Thyroid gland (tissue), 4 donors: ENCODE measurements at regions of chr11 and their contacts with region 1.

Region 1: GRCh38 chr11:95150946-95151684 is 61.5 kb downstream of the ENDOD1 start:
- DNase-seq: peak; percentile 93 to 94
- H3K4me3 ChIP-seq: peak overlapping the region; percentile 40 to 60 (median 57)
- H3K27ac ChIP-seq: peak overlapping the region; percentile 91 to 97 (median 95)
- H3K4me1 ChIP-seq: peaks cover 7 to 12% of the 10 kb centered on the region in 2 donors
- H3K27me3 ChIP-seq: no peaks in the 10 kb centered on the region
- CTCF ChIP-seq: peak; percentile 73 to 97 (median 88)
- POLR2A ChIP-seq: peak; percentile 34 to 94

Region 2: GRCh38 chr11:94973099-94973968 is 177.8 kb before region 1 on chr11 and contains the starts of genes CWC15 and KDM4D:
- intact Hi-C with region 1: loop called (anchors 10 kb)
- DNase-seq: peak; percentile 94 to 96
- H3K4me3 ChIP-seq: peak within 1 kb of the TSS; percentile 24 to 100 (median 73)
- H3K27ac ChIP-seq: peak within 1 kb of the TSS; percentile 73 to 84 (median 76)
- H3K4me1 ChIP-seq: peaks cover 7 to 9% of the 10 kb centered on the region in 2 donors
- H3K27me3 ChIP-seq: no peaks in the 10 kb centered on the region
- CTCF ChIP-seq: no peak
- POLR2A ChIP-seq: peak in 1 of 2 donors; percentile 76
- total RNA-seq, gene CWC15: 25.7 to 61.6 (median 43.6) TPM
- total RNA-seq, gene KDM4D: 0.83 to 1.2 (median 0.98) TPM

Region 3: DNA sequence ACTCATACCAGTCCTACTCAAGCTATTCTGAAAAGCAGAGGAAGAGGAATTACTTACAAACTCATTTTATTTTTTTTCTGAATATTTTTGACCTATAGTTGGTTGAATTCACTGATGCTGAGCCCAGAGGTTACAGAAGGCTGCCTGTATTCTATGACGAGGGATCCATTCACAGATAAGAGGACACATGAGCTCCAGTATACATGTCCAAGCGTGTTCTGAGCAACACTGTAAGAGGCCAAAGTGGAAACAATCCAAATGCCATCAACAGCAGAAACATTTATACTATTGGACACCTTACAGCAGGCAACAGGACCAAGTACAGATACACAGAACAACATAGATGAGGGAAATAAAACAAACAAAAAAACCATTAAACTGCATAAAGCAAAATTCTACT is 115.8 kb before region 1 on chr11:
- intact Hi-C with region 1: no loop called
- DNase-seq: no peak
- H3K4me3 ChIP-seq: no peak overlapping the region
- H3K27ac ChIP-seq: no peak overlapping the region
- H3K4me1 ChIP-seq: no peaks in the 10 kb centered on the region
- H3K27me3 ChIP-seq: peaks cover 6% of the 10 kb centered on the region
- CTCF ChIP-seq: no peak
- POLR2A ChIP-seq: no peak

Region 4: GRCh38 chr11:95074806-95075563 is 76.1 kb before region 1 on chr11:
- intact Hi-C with region 1: loop called (anchors 5 kb)
- DNase-seq: peak; percentile 87 to 91
- H3K4me3 ChIP-seq: no peak overlapping the region
- H3K27ac ChIP-seq: peak overlapping the region; percentile 77 to 89 (median 79)
- H3K4me1 ChIP-seq: peaks cover 32 to 36% of the 10 kb centered on the region in 2 donors
- H3K27me3 ChIP-seq: no peaks in the 10 kb centered on the region
- CTCF ChIP-seq: no peak
- POLR2A ChIP-seq: no peak

Region 5: GRCh38 chr11:95200781-95201457 is 49.8 kb after region 1 on chr11:
- intact Hi-C with region 1: no loop called
- DNase-seq: no peak
- H3K4me3 ChIP-seq: no peak overlapping the region
- H3K27ac ChIP-seq: no peak overlapping the region
- H3K4me1 ChIP-seq: no peaks in the 10 kb centered on the region
- H3K27me3 ChIP-seq: no peaks in the 10 kb centered on the region
- CTCF ChIP-seq: no peak
- POLR2A ChIP-seq: no peak

Region 6: DNA sequence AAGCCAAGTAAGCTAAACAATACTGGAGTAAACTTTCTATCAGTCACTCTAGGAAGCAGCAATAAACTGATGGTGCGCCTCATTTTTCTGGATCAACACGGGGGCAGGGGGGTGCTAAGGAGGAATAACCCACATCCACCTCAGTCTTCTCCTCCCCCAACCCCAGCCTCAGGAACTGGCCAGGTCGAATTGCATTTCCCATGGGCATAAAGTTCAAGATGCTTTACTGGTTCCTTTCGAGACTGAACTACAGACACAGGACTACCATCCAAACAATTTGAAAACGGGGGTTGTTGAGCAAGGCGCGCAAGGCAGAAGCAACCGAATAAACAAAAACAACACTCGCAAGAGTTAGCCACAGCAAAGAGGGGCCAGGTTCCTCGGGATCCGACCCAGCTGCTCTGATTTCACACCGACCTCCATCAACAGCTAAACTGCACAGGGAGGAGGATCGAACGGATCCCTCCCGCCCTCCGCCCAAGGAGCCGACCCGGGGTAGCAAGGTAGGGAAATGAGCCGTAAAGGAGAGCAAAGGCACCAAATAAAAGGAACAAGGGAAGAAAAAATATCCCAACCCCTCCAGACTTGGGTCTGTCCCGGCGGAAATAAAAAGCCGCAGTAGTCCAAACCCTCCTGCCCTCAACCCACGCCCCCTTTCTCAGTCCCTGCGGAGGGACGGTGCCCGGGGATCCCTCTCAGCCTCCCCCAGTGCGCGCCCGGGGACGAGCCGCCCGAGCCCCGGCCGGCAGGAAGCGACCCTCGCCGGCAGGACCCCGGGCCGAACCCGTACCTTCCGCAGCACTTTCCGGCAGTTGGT is 79.1 kb after region 1 on chr11:
- intact Hi-C with region 1: loop called (anchors 10 kb)
- DNase-seq: peak; percentile 20 to 33
- H3K4me3 ChIP-seq: peak overlapping the region; percentile 23 to 88 (median 73)
- H3K27ac ChIP-seq: peak overlapping the region; percentile 79 to 95 (median 86)
- H3K4me1 ChIP-seq: peaks cover 13 to 21% of the 10 kb centered on the region in 2 donors
- H3K27me3 ChIP-seq: no peaks in the 10 kb centered on the region
- CTCF ChIP-seq: no peak
- POLR2A ChIP-seq: peak in 1 of 2 donors; percentile 5

Region 7: DNA sequence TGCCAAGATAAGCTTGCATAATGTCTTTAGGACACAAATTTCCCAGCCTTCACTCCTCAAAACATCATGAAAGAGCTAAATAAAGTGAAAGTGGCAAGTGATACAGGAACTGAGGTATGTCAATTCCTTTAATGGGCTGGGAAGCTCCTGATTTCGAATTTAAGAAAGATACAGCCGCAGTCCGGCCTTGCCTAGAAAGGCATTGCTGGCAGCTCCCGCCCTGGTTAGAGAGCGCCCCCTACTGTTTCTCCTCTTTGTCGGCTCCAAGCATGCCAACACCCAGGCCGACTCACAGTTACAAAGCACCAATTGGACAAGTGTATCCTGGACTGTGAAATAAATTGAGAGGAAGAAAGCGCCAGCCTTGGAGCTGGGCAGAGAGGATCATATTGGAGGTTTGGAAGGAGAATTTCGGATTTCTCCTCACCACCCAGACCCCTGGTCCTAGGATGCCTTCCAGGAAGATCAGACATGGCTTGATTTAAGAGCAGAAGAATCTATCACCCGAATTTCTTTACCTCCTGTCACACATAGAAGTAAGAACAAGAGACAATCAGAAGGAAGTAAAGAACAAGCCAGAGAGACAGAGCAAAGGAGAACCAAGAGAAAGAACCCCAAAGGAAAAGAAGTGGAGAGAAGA is 554.5 kb after region 1 on chr11:
- intact Hi-C with region 1: loop called (anchors 2 kb)
- DNase-seq: peak; percentile 88 to 91
- H3K4me3 ChIP-seq: no peak overlapping the region
- H3K27ac ChIP-seq: peak overlapping the region; percentile 4 to 66 (median 49)
- H3K4me1 ChIP-seq: peaks cover 0 to 12% of the 10 kb centered on the region in 2 donors
- H3K27me3 ChIP-seq: no peaks in the 10 kb centered on the region
- CTCF ChIP-seq: peak; percentile 57 to 96 (median 92)
- POLR2A ChIP-seq: no peak

Region 8: GRCh38 chr11:95739108-95739938 is 588.2 kb after region 1 on chr11:
- intact Hi-C with region 1: no loop called
- DNase-seq: no peak
- H3K4me3 ChIP-seq: no peak overlapping the region
- H3K27ac ChIP-seq: no peak overlapping the region
- H3K4me1 ChIP-seq: peaks cover 2 to 7% of the 10 kb centered on the region in 2 donors
- H3K27me3 ChIP-seq: no peaks in the 10 kb centered on the region
- CTCF ChIP-seq: peak in 1 of 6 experiments; percentile 5
- POLR2A ChIP-seq: no peak

Region 9: GRCh38 chr11:95764267-95764898 is 613.3 kb after region 1 on chr11:
- intact Hi-C with region 1: loop called (anchors 5 kb)
- DNase-seq: no peak
- H3K4me3 ChIP-seq: no peak overlapping the region
- H3K27ac ChIP-seq: no peak overlapping the region
- H3K4me1 ChIP-seq: peaks cover 0 to 11% of the 10 kb centered on the region in 2 donors
- H3K27me3 ChIP-seq: no peaks in the 10 kb centered on the region
- CTCF ChIP-seq: peak; percentile 44 to 83 (median 62)
- POLR2A ChIP-seq: no peak